ENCODE measurements at regions of chr2 and their contacts with region 1.

Region 1: GRCh38 chr2:170973492-170974303 is 44.6 kb downstream of the GORASP2 start:
- DNase-seq: peak; percentile 62
- ATAC-seq: peak; percentile 91
- H3K4me3 ChIP-seq: peak overlapping the region; percentile 50 to 62
- H3K27ac ChIP-seq: peak overlapping the region; percentile 50; the same call in 1 of the 2 replicates
- H3K4me1 ChIP-seq: peaks cover 12 to 19% of the 10 kb centered on the region in 2 experiments; a peak in 3 of 4 replicates
- H3K27me3 ChIP-seq: no peaks in the 10 kb centered on the region
- CTCF ChIP-seq: peak; percentile 76 to 92 (median 82)
- POLR2A ChIP-seq: no peak
- RAD21 ChIP-seq: peak; percentile 89

Region 2: DNA sequence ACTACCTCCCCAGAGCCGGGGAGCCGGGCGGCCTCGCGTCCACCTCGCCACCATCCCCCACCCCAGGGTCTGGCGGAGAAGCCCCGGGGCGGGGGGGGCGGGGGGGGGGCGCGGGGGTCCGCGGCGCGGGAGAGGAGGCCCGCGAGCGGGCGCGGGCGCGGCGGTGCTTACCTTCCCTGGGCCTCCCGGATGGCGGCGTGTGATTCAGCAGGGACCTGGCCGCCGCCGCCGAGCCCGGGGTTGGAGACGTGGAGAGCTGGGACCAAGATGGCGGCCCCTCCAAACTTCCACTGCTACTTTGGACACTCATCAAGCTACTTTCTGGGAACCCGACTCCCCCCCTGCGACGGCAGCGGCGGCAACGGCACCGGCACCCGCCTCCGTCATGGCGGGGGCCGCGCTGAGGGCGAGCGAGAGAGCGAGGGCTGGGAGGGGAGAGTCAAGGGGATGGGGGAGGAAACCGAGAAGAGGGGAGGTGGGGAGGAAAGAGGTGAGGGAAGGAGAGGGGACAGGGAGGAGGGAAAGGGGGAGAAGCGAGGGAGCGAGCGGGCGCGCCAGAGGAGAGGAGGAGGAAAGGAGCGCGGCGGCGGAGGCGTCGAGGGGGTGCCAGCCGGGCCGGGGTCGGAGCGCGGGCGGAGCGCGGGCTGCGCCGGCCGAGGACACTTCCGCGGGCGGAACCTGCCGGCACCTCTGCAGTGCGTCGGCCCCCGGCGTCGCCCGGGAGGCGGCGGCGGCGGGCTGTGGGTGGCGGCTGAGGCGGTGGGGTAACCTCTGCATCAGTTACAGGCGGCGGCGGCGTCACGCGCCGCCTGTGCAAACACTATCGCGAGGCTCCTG is 186.6 kb after region 1 on chr2 and contains the start of gene TLK1:
- CTCF ChIA-PET with region 1: interaction called, 3 read pairs
- POLR2A ChIA-PET with region 1: no interaction called
- RAD21 ChIA-PET with region 1: no interaction called
- intact Hi-C with region 1: loop called (anchors 2 kb)
- DNase-seq: peak; percentile 21
- ATAC-seq: peak; percentile 77
- H3K4me3 ChIP-seq: peak within 1 kb of the TSS; percentile 87 to 94
- H3K27ac ChIP-seq: peak within 1 kb of the TSS; percentile 94
- H3K4me1 ChIP-seq: peaks cover 4 to 19% of the 10 kb centered on the region in 2 experiments; a peak in 3 of 4 replicates
- H3K27me3 ChIP-seq: no peaks in the 10 kb centered on the region
- CTCF ChIP-seq: no peak
- POLR2A ChIP-seq: peak; percentile 20
- RAD21 ChIP-seq: no peak
- total RNA-seq, gene TLK1: 57.7 TPM

Region 3: GRCh38 chr2:171433763-171434670 is 460.3 kb after region 1 on chr2 and contains the starts of genes DCAF17 and METTL8:
- CTCF ChIA-PET with region 1: no interaction called
- POLR2A ChIA-PET with region 1: no interaction called
- RAD21 ChIA-PET with region 1: no interaction called
- intact Hi-C with region 1: loop called (anchors 1 kb)
- DNase-seq: peak; percentile 87
- ATAC-seq: peak; percentile 93
- H3K4me3 ChIP-seq: peak within 1 kb of the TSS; percentile 69 to 90
- H3K27ac ChIP-seq: peak within 1 kb of the TSS; percentile 94
- H3K4me1 ChIP-seq: peaks cover 9 to 45% of the 10 kb centered on the region in 2 experiments; a peak in 3 of 4 replicates
- H3K27me3 ChIP-seq: no peaks in the 10 kb centered on the region
- CTCF ChIP-seq: peak; percentile 25 to 42 (median 38); a peak in 4 of 6 replicates
- POLR2A ChIP-seq: peak; percentile 61
- RAD21 ChIP-seq: no peak
- total RNA-seq, gene DCAF17: 17.7 TPM
- total RNA-seq, gene METTL8: 34.4 TPM